ENCODE measurements at regions of chr14 and their contacts with region 1.

Region 1: GRCh38 chr14:96056509-96057422 is 17.6 kb downstream of the C14orf132 start:
- DNase-seq: peak; percentile 9
- H3K4me3 ChIP-seq: no peak overlapping the region
- H3K27ac ChIP-seq: no peak overlapping the region
- H3K4me1 ChIP-seq: no peaks in the 10 kb centered on the region
- CTCF ChIP-seq: peak; percentile 52

Region 2: DNA sequence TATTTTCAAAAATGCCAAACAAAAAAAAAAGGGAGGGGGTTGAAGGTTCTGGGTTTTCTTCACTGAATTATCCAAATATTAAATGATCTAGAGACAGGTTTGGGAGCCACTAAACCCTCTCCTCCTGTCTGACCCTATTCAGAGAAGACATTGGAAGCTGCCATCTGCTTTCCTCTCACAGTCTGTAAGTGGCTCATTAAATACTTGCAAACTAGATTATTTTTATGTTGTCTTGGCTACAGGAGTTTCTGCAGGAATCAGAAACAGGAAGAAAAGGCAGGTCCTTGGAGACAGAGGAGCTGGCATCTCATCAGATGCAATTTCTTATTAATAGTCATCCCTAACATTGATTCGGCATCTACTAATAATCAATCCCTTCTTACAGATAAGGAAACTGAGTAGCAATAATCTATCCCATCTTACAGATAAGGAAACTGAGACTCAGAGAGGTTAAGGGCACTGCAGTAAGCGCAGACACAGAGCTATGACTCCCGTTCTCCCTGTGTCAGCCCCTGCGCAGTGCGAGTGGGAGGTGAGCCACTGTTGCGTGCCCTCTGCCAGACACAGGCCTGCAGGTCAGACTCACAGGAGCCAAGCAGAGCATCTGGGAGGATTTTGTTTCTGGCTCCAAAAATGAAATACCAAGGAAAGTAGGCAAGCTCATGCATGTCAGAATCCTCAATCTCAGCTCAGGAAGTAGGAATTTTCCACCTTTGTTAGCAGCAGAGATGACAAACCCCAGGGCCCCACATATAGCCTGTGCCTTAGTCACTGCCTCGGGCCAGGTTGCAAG is 158.9 kb after region 1 on chr14:
- CTCF ChIA-PET with region 1: no interaction called
- POLR2A ChIA-PET with region 1: no interaction called
- intact Hi-C with region 1: no loop called
- DNase-seq: no peak
- H3K4me3 ChIP-seq: no peak overlapping the region
- H3K27ac ChIP-seq: no peak overlapping the region
- H3K4me1 ChIP-seq: no peaks in the 10 kb centered on the region
- CTCF ChIP-seq: no peak

Region 3: GRCh38 chr14:96275177-96276112 is 218.7 kb after region 1 on chr14:
- CTCF ChIA-PET with region 1: no interaction called
- POLR2A ChIA-PET with region 1: no interaction called
- intact Hi-C with region 1: loop called (anchors 5 kb)
- DNase-seq: peak; percentile 61
- H3K4me3 ChIP-seq: no peak overlapping the region
- H3K27ac ChIP-seq: no peak overlapping the region
- H3K4me1 ChIP-seq: no peaks in the 10 kb centered on the region
- CTCF ChIP-seq: peak; percentile 95

Measured in OCI-LY7 (cell line).